ENCODE measurements at regions of chr11 and their contacts with region 1.

Region 1: DNA sequence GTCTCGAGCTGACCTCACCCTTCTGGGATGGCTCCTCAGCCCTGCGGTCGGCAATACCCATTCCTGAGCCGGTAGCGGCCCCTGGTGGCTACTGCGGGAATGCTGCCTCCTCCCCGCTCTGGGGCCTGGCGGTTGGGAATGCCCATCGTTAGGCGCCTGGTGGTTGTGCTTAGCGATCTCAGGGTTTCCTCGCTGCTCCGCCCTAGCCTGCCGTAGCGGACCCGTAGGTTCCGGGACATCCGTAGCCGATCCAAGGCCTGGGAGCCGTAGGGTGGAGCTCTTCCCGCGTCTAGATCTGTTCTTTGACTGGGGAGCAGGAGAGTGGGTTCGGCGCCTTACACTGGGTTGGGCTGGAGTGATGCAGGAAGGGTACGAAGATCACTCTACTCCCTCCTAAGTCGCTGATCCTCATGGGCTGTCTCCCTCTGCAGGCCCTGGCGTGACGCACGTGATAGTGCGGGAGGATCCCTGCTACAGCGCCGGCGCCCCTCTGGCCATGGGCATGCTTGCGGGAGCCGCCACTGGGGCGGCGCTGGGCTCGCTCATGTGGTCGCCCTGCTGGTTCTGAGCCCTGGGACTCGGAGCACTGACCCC is 14.8 kb downstream of the PLEKHB1 start:
- DNase-seq: peak; percentile 67 to 91 (median 80)
- ATAC-seq: peak; percentile 97
- H3K4me3 ChIP-seq: no peak overlapping the region
- H3K4me3 Mint-ChIP-seq: peak overlapping the region in 5 of 10 donors; percentile 29 to 58 (median 36)
- H3K27ac ChIP-seq: no peak overlapping the region
- H3K27ac Mint-ChIP-seq: peak overlapping the region in 4 of 9 donors; percentile 14 to 41 (median 34)
- H3K4me1 ChIP-seq: peaks cover 5 to 15% of the 10 kb centered on the region in 2 donors
- H3K4me1 Mint-ChIP-seq: peaks cover 13 to 32% (median 23%) of the 10 kb centered on the region in 7 donors
- H3K27me3 ChIP-seq: no peaks in the 10 kb centered on the region
- H3K27me3 Mint-ChIP-seq: no peaks in the 10 kb centered on the region

Region 2: DNA sequence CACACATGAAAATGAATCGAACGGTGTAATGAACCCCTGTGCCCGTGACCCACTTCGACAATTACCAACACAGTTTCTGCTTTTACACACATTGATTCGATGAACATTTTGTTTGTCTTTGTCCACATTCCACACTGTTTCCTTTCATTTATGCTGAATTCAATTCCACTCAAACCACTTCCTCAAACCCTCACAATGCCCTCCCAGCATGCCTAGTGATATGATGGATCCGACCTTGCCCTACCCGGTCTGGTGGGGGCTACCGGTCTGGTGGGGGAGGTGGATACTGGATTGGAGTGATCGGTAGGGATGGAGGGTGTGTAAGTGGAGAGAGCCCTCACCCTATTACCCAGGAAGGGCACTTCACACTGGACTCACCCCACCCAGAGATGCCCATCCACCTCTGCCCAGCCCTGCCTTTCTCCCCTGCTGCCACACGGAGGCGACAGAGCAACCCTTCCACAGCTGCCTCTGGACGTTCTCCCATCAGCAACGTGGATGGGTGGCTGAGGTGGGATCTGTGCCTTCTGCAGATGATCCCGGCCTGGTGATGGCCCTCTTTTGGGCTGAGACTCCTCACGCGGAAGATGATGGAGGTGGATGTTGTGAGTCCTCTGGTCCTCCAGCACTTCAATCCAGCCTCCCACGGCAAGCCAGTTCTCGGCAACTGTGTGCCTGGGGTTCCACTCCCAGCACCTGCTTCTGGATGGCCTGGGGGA is 476.0 kb before region 1 on chr11:
- CTCF ChIA-PET with region 1: no interaction called
- POLR2A ChIA-PET with region 1: no interaction called
- intact Hi-C with region 1: no loop called
- DNase-seq: peak in 7 of 9 donors; percentile 9 to 56 (median 31)
- ATAC-seq: peak; percentile 79
- H3K4me3 ChIP-seq: no peak overlapping the region
- H3K4me3 Mint-ChIP-seq: peak overlapping the region in 1 of 10 donors; percentile 20
- H3K27ac ChIP-seq: no peak overlapping the region
- H3K27ac Mint-ChIP-seq: no peak overlapping the region
- H3K4me1 ChIP-seq: no peaks in the 10 kb centered on the region
- H3K4me1 Mint-ChIP-seq: peaks cover 0 to 8% (median 4%) of the 10 kb centered on the region in 7 donors
- H3K27me3 ChIP-seq: peaks cover 0 to 2% of the 10 kb centered on the region in 2 donors
- H3K27me3 Mint-ChIP-seq: peaks cover 0 to 30% (median 15%) of the 10 kb centered on the region in 5 donors

Region 3: DNA sequence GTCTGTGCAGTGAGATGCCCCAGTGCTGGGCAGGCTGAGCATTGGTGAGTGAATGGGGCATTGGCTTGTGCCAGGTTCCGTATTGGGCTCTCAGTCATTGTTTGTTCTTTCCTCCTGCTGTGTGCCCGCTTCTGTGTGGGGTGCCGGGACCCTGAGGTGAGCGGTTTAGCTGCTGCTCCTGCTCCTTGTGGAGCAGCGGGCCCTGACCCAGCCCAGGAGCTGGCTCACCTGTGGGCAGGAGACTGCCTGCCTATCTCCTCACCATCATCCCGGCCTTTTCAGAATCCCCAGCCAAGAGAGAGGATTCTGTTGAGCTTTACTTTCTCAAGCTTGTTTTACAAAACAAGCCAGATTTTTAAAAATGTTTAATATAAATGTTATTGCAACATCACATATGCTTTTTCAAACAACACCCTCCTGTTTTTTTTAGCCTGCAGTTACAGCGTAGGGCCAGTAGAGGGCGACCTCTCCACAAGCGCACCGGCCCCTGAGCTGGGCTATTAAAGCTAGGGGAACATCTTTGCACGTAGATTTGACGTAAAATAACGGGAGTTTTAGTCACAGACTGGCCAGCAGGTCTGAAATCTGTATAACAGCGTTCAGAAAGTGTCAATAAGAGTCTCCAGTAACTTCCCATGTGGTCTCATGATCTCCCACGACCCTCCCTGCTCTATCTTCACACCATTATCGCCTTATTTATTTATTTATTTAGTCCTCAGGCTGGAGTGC is 310.1 kb before region 1 on chr11:
- CTCF ChIA-PET with region 1: interaction called, 19 read pairs
- POLR2A ChIA-PET with region 1: no interaction called
- intact Hi-C with region 1: loop called (anchors 1 kb)
- DNase-seq: peak; percentile 45 to 78 (median 68)
- ATAC-seq: peak; percentile 97
- H3K4me3 ChIP-seq: no peak overlapping the region
- H3K4me3 Mint-ChIP-seq: no peak overlapping the region
- H3K27ac ChIP-seq: no peak overlapping the region
- H3K27ac Mint-ChIP-seq: peak overlapping the region in 6 of 9 donors; percentile 45 to 83 (median 54)
- H3K4me1 ChIP-seq: no peaks in the 10 kb centered on the region
- H3K4me1 Mint-ChIP-seq: peaks cover 0 to 19% (median 3%) of the 10 kb centered on the region in 7 donors
- H3K27me3 ChIP-seq: no peaks in the 10 kb centered on the region
- H3K27me3 Mint-ChIP-seq: peaks cover 0 to 10% (median 5%) of the 10 kb centered on the region in 5 donors

Region 4: GRCh38 chr11:73478738-73479347 is 182.3 kb before region 1 on chr11:
- CTCF ChIA-PET with region 1: interaction called, 5 read pairs
- POLR2A ChIA-PET with region 1: no interaction called
- intact Hi-C with region 1: loop called in 1 of 2 experiments (anchors 10 kb)
- DNase-seq: no peak
- ATAC-seq: no peak
- H3K4me3 ChIP-seq: no peak overlapping the region
- H3K4me3 Mint-ChIP-seq: no peak overlapping the region
- H3K27ac ChIP-seq: no peak overlapping the region
- H3K27ac Mint-ChIP-seq: peak overlapping the region in 1 of 9 donors; percentile 11
- H3K4me1 ChIP-seq: no peaks in the 10 kb centered on the region
- H3K4me1 Mint-ChIP-seq: peaks cover 0 to 22% (median 11%) of the 10 kb centered on the region in 7 donors
- H3K27me3 ChIP-seq: no peaks in the 10 kb centered on the region
- H3K27me3 Mint-ChIP-seq: peaks cover 0 to 2% (median 0%) of the 10 kb centered on the region in 5 donors

Region 5: GRCh38 chr11:73633999-73634398 is 27.1 kb before region 1 on chr11:
- CTCF ChIA-PET with region 1: interaction called, 38 read pairs
- POLR2A ChIA-PET with region 1: no interaction called
- intact Hi-C with region 1: no loop called
- DNase-seq: peak in 6 of 9 donors; percentile 18 to 40 (median 36)
- ATAC-seq: peak; percentile 41
- H3K4me3 ChIP-seq: no peak overlapping the region
- H3K4me3 Mint-ChIP-seq: peak overlapping the region in 8 of 10 donors; percentile 12 to 53 (median 30)
- H3K27ac ChIP-seq: peak overlapping the region; percentile 17
- H3K27ac Mint-ChIP-seq: peak overlapping the region; percentile 45 to 87 (median 71)
- H3K4me1 ChIP-seq: peaks cover 0 to 19% of the 10 kb centered on the region in 2 donors
- H3K4me1 Mint-ChIP-seq: peaks cover 9 to 26% (median 18%) of the 10 kb centered on the region in 7 donors
- H3K27me3 ChIP-seq: no peaks in the 10 kb centered on the region
- H3K27me3 Mint-ChIP-seq: no peaks in the 10 kb centered on the region

Measured in naive thymus-derived CD4-positive, alpha-beta T cell (primary cell).